ENCODE measurements at regions of chr18 and their contacts with region 1.

Region 1: DNA sequence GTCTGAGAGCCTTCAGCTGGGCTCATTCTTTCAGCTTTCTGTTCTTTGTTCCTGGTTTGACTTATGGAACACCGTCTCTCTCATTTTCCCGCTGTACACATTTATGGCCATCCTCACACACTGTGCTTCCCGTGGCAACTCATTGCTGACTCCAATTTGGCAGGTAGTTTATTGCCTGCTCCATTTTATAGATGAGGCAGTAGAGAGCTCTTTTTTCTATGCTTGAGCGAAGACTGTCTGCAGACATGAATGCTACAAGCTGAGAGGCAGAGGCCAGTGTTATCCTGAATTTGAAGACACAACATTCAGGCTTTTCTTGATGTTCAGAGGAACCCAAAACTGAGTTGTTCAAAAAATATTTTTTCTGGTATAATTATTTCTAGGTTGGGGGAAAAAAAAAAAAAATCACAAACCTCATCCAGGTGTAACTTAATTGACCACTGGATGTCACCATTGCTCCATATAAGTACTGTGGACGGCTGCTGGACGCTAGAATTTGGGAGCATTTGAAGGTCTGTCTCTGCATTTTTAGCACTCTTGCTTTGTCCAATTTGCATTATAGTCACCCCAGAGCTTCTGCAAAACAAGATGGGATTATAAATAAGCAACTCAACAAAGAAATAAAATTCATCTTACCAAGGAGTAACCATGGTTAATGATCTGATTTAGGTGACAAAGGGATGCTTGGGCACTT is 83.5 kb downstream of the HRH4 start:
- DNase-seq: no peak
- ATAC-seq: peak; percentile 56 to 71 (median 64)
- H3K4me3 ChIP-seq: no peak overlapping the region
- H3K27ac ChIP-seq: no peak overlapping the region
- H3K4me1 ChIP-seq: peaks cover 0 to 5% (median 0%) of the 10 kb centered on the region in 4 donors
- H3K27me3 ChIP-seq: no peaks in the 10 kb centered on the region
- CTCF ChIP-seq: peak; percentile 38 to 61 (median 50)
- POLR2A ChIP-seq: no peak

Region 2: DNA sequence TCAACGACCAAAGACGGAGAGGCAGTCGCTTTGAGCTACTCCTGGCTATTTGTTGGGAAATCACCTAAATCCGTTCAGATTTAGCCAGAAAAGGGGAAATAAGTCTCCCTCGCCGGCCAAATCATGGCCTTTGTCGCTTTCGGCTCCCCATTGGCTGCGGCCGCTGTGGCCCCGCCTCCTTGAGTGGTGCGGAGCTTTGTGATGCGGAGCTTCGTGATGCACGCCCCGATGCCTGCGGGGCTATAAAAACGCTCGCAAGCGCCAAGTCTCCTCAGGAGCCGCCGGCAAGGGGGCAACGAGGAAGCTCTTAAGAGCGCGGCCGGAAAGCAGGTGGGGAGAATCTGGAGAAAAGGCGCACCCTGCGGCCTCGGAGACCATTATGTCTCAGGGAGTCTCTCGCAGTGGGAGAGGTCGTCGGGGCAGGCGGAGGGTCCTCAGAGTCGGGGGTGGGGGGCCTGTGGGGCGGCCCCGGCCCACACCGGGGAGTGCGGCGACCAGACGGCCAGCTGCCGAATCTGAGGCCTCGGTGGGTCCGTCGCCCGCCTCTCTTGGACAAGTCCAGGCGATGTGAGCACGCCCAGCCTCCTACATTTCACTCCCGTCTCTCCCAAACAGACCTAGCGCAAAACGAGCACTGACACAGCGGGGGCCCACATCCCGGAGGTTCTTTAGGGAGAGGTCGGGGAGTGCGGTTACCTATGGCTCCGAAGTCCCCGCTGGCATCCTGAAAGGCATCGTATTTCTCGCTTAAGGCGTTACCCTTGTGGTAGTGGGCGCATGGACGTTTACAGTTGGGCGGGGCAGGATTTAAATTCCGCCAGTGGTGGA is 404.9 kb before region 1 on chr18 and contains the start of gene CABYR:
- intact Hi-C with region 1: no loop called
- DNase-seq: peak; percentile 66 to 77 (median 67)
- ATAC-seq: peak; percentile 76 to 87 (median 84)
- H3K4me3 ChIP-seq: peak within 1 kb of the TSS; percentile 42 to 59 (median 42)
- H3K27ac ChIP-seq: peak within 1 kb of the TSS in 1 of 3 donors; percentile 82
- H3K4me1 ChIP-seq: peaks cover 0 to 43% (median 4%) of the 10 kb centered on the region in 4 donors
- H3K27me3 ChIP-seq: no peaks in the 10 kb centered on the region
- CTCF ChIP-seq: no peak
- POLR2A ChIP-seq: peak; percentile 56
- total RNA-seq, gene CABYR: 0.31 to 7.5 (median 3.7) TPM in 4 of 6 experiments, not detected in the others

Region 3: DNA sequence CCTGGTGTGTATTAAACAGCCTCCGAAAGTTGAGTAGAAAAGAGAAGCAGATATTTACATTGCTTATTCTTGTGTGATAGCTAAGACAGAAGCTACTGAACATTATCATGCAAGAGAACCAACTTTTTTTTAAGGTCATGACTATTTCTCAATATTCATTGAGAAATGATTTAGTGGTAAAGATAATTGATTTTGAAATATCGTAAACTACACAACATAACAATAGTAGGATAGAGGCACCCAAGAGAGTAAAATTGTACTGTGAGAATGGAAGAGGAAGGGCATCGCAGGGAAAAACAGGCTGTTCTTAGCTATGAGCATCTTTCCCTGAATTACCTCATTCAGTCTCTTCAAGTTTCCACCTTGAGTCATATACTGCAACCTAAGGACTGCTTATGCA is 58.3 kb before region 1 on chr18:
- intact Hi-C with region 1: no loop called
- DNase-seq: no peak
- ATAC-seq: no peak
- H3K4me3 ChIP-seq: no peak overlapping the region
- H3K27ac ChIP-seq: no peak overlapping the region
- H3K4me1 ChIP-seq: no peaks in the 10 kb centered on the region
- H3K27me3 ChIP-seq: no peaks in the 10 kb centered on the region
- CTCF ChIP-seq: no peak
- POLR2A ChIP-seq: no peak

Region 4: DNA sequence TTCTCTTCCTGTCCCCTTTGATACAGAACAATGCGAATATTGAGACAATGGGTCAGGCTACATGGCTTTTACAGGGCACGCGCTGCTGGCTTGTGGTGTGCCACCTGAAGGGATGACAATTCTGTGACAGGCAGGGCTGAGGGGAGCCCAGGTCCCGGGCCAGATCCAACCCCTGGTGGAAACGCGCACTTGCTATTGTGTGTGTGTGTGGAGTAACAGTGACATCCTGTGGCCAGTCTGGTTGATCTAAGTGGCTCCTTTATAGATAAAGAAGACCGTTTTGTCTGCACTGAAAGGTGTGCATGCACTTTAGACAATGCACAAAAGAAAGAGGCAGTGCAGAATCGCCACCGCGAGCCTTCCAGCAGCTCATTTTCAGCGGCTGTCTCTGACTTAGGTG is 190.1 kb after region 1 on chr18:
- intact Hi-C with region 1: loop called (anchors 10 kb)
- DNase-seq: no peak
- ATAC-seq: no peak
- H3K4me3 ChIP-seq: no peak overlapping the region
- H3K27ac ChIP-seq: no peak overlapping the region
- H3K4me1 ChIP-seq: no peaks in the 10 kb centered on the region
- H3K27me3 ChIP-seq: peaks cover 0 to 3% of the 10 kb centered on the region in 2 donors
- CTCF ChIP-seq: peak in 1 of 4 donors; percentile 12
- POLR2A ChIP-seq: no peak

Measured in right lobe of liver (tissue), 6 donors.